Motor neuron (in vitro differentiated cells): ENCODE measurements at regions of chr3 and their contacts with region 1.

Region 1: GRCh38 chr3:62332835-62333244 is 40.5 kb downstream of the FEZF2 start:
- ATAC-seq: peak in 1 of 8 experiments; percentile 37
- H3K4me3 ChIP-seq: no peak overlapping the region
- H3K27ac ChIP-seq: no peak overlapping the region
- H3K4me1 ChIP-seq: peaks cover 0 to 8% of the 10 kb centered on the region in 2 donors

Region 2: GRCh38 chr3:62011666-62012065 is 321.2 kb before region 1 on chr3:
- in situ Hi-C with region 1: no loop called
- ATAC-seq: no peak
- H3K4me3 ChIP-seq: no peak overlapping the region
- H3K27ac ChIP-seq: no peak overlapping the region
- H3K4me1 ChIP-seq: peaks cover 0 to 9% of the 10 kb centered on the region in 2 donors

Region 3: DNA sequence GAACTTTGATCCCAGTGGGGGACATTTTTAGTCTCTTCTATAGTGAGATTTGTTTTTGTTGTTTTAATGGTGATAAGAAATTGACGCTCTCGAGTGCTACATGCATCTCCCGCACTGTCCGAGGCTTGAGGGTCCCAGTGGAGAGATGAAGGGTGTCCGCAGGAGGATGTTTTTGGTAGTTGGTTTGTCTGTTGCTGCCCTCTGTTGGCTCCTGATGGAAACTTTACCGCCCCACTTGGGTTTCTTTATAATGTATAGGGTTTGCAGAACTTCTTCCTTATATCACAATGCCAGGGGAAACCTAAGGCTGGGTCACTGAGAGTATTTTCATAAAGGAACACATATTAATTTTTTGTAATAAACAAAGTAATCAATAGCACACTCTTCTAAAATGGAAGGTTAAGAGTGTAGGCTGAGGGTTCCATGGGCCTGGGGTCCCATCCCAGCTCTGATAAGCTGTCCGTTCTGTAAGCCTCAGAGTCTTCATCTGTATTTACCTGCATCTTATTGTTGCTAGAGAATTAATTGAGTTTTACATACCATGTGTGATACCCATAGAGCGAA is 225.8 kb after region 1 on chr3:
- in situ Hi-C with region 1: loop called in 4 of 9 experiments (anchors 10 to 25 kb)
- ATAC-seq: peak in 2 of 8 experiments; percentile 26 to 56
- H3K4me3 ChIP-seq: no peak overlapping the region
- H3K27ac ChIP-seq: no peak overlapping the region
- H3K4me1 ChIP-seq: no peaks in the 10 kb centered on the region

Region 4: DNA sequence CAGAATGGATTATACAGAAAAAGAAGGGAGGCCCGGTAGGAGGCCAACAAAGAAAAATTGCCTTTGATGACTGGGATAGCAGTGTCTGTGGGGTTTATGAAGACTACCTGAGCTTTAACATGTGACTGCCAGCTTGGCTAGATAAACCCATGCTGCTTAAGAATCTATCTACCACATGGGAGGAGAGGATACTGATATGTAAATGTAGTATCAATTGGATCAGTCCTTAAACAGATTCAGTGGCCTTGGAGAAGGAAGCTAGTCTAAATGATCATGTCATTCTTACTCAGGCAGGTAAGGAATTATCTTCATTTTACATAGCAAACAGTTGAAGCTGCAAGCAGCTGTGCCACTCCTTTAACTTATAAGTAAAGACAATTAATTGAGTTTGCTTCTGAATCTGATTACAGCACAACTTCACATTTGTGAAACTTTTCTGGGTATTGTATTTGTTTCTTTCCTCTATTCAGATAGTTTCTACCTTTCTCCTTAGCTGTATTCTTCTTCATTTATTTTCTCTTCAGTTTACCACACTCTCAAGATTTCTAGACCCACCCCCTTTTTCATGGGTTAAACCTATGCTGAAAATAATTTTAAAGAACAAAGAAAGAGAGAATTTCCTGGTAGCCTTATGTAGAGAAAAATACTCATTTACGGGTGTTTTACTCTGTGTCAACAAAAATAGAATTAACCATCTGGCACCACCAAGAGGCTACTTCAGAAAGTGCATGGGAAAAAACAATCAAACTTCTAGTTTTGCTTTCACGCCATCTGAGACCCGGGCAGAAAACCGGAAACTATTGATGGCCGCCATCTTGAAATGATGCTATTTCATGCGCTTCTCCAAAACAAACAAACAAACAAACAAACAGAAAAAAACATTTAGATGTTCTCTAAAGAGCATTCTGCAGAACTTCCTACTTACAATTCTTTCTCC is 895.5 kb after region 1 on chr3:
- in situ Hi-C with region 1: loop called in 2 of 9 experiments (anchors 25 kb)
- ATAC-seq: peak in 4 of 8 experiments; percentile 54 to 92 (median 80)
- H3K4me3 ChIP-seq: no peak overlapping the region
- H3K27ac ChIP-seq: no peak overlapping the region
- H3K4me1 ChIP-seq: peaks cover 0 to 9% of the 10 kb centered on the region in 2 donors